Posterior vena cava (tissue), 2 donors: ENCODE measurements at regions of chr4 and their contacts with region 1.

Region 1: DNA sequence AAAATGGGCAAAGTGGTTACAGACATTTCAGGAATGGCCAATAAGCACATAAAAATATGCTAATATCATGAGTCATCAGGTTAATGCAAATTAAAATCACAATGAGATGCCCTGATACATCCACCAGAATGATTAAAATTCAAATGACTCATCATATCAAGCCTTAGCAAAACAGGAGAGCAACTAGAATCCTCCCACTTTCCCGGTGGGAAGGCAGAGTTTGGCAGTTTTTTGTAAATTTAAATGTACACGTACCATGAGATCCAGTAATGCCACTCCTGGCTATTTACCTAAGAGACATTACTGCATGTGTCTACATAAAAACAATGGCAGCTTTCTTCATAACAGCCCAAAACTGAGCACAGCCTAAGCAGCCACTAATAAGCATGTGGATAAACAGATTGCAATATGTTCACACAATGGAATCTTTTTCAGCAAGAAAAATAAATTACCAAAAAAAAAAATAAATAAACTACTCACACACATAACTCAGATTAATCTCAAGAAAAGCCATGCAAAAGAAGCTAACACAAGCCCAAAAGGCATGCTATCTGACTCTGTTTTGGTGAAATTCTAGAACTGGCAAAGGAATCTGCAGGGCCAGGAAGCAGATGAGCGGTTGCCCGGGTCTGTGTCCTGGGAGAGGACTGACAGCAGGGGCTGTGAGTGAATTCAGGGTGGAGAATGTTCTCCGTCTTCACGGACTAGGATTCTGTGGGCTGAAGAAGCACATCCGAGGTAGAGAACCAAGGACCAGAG is 48.8 kb downstream of the AFAP1 start:
- DNase-seq: no peak

Region 2: DNA sequence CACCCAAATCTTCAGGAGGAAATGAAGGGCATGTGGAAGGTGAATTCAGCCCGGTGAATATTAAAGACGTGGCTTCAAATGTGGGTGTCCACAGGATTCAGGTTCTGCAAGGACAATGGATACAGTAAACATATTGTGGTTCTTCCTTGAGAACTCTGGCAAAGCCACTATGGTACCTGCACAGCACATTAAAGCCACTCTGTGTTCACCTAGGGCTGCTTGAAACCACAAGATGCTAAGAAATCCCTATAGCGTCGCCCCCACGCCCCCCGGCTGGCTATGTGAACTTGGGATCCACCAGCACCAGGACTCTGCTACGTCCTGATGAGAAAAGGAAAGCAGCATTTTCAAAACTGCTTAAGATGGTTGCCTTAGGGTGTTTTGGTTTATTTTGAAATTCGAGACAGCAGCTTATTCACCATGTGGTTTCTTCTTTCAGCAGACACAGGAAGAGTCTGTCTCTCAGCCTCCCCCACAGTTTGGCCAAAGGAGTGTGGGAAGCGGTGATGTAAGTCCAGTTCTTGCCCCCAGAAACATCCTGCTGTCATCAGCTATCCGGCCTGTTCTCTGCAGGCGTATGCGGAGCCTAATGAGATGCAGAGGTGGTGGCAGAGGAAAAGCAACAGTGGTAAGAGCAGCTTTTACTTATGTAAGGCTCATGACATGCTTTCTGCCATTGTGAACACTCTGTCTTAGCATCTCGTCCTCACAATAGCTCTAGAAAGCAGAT is 62.7 kb before region 1 on chr4:
- intact Hi-C with region 1: loop called in 1 of 2 experiments (anchors 10 kb)
- DNase-seq: peak; percentile 94

Region 3: GRCh38 chr4:7910952-7911578 is 20.3 kb after region 1 on chr4:
- intact Hi-C with region 1: no loop called
- DNase-seq: no peak

Region 4: GRCh38 chr4:7939377-7940108 is 48.7 kb after region 1 on chr4 and contains the start of gene AFAP1:
- intact Hi-C with region 1: no loop called
- DNase-seq: peak; percentile 93
- total RNA-seq, gene AFAP1: 45.3 TPM

Region 5: DNA sequence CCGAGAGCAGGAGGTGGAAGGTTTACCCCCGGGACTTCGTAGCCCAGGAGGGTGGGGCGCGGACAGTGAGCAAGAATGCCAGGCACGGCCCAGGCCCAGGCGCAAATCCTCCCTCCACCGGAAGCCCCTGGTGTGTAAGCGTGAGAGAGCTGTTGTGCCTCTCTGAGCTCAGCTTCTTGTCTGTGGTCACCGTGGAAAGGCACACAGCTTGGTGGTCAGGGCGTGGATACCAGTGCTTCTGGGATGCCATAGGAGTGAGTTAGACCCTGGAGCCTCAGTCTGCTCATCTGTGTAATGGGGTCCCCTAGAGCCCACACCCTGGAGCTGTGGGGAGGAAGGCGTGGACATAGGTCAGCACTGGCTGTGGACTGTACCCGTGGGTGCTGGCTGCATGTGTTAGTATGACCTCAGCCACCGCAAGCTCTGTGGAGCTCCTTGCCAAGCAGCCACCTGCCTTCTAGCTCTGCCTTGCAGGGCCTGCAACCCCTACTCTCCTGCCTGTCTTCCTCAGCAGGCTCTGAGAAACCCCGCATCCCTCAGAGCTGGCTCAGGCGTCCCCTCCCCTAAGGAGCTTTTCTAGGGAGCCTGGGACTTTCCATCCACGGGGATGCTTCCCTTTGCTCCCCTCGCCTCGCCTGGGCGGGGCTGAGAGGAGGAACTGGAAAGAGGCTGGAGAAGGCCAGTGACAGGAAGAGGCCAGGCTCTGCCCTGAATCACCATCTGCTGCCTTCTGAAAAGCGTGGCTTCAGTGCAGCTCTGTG is 76.9 kb after region 1 on chr4:
- intact Hi-C with region 1: loop called in 1 of 2 experiments (anchors 1 kb)
- DNase-seq: peak; percentile 84

Region 6: DNA sequence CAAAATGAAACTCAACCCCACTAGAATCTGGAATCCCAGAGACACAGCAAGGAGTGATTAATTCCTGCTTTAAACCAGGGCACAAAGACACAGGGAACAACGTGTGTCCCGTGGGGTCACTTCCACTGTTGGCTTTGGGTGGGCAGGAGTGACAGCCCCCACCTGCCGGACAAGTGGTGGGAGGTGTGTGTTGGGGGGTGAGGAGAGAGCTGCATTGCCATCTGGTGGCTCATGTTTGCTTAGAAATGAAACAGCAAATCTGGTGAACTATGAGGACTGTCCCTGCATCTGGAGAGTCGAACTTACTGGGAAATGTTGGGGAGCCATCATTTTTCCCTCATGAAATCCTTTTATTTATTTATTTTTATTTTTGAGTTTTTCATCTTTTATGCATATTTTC is 124.7 kb after region 1 on chr4:
- intact Hi-C with region 1: no loop called
- DNase-seq: no peak